Mucosa of descending colon (tissue), 3 donors: ENCODE measurements at regions of chr1 and their contacts with region 1.

Region 1: GRCh38 chr1:241756582-241756981 is 91.4 kb upstream of the EXO1 start:
- DNase-seq: no peak
- ATAC-seq: no peak
- H3K4me3 ChIP-seq: no peak overlapping the region
- H3K4me1 ChIP-seq: no peaks in the 10 kb centered on the region
- CTCF ChIP-seq: no peak

Region 2: GRCh38 chr1:241813768-241814270 is 57.2 kb after region 1 on chr1:
- intact Hi-C with region 1: loop called in 1 of 2 experiments (anchors 2 kb)
- DNase-seq: no peak
- ATAC-seq: no peak
- H3K4me3 ChIP-seq: no peak overlapping the region
- H3K4me1 ChIP-seq: no peaks in the 10 kb centered on the region
- CTCF ChIP-seq: no peak